ENCODE measurements at regions of chr11 and their contacts with region 1.

Region 1: GRCh38 chr11:60924110-60924905 is at the start of gene TMEM132A:
- DNase-seq: peak; percentile 88
- total RNA-seq, gene TMEM132A: 5.4 to 7.7 TPM

Region 2: DNA sequence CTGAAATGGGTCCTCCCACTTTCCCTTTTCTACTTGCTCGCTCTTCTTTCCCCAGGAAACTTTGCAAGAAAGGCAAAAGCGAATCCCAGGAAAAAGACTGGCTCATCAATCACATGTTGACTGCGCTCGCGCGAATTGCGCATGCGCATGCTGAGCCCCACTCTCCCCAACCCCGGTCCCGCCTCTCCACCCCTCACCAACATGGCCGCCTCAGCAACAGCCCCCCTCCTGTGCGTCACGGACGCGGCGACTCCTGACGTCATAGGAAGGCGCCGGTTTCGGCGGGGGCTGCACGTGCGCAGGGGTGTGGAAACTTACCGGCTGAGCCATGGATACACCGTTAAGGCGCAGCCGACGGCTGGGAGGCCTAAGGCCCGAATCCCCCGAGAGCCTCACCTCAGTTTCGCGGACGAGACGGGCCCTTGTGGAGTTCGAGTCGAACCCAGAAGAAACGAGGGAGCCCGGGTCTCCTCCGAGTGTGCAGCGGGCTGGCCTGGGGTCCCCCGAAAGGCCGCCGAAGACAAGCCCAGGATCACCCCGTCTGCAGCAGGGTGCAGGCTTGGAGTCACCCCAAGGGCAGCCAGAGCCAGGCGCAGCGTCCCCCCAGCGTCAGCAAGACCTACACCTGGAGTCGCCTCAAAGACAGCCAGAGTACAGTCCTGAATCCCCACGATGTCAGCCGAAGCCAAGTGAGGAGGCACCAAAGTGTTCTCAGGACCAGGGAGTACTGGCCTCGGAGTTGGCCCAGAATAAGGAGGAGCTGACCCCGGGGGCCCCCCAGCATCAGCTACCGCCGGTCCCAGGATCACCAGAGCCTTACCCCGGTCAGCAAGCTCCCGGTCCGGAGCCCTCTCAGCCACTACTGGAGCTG is 82.3 kb before region 1 on chr11 and contains the start of gene CCDC86:
- intact Hi-C with region 1: no loop called
- DNase-seq: peak; percentile 99
- total RNA-seq, gene CCDC86: 14.9 to 21.9 TPM

Region 3: GRCh38 chr11:60872961-60873524 is 51.3 kb before region 1 on chr11:
- intact Hi-C with region 1: no loop called
- DNase-seq: peak; percentile 76

Region 4: DNA sequence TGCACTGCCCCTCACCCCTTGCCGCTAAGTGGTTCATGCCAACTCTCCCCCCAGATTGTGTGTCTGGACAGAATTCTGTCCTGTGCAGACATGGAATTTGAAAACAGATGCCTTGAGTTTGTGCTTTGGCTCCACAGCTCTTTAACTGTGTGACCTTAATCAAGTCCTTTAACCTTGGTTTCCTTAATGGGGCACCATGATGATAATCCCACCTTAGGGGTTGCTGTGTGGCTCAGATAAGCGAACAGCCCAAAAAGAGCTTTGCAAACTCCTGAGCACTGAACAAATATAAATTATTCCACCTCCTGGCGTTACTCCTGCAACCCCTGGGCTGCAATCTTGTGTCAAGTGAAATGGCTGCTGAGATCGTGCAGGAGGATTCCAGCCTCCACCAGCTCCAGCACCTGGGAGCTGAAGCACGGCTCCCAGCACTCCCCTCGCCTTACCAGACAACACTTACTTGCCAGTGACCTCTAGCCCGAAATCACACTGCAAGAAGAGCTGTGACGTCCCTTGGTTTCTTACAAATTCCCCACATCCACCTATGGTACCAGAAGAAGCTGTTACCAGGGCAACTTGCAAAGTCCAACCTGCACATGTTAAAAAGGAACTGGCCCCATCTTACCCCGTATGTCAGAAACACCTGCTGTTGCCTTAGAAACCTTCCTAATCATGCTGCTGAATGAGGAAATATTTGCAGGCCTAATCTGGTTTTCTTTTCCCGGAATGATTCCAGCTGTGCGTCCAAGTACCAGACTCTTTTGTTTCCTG is 223.7 kb after region 1 on chr11:
- intact Hi-C with region 1: loop called in 1 of 2 experiments (anchors 1 kb)
- DNase-seq: peak; percentile 26